ENCODE measurements at regions of chr14 and their contacts with region 1.

Region 1: DNA sequence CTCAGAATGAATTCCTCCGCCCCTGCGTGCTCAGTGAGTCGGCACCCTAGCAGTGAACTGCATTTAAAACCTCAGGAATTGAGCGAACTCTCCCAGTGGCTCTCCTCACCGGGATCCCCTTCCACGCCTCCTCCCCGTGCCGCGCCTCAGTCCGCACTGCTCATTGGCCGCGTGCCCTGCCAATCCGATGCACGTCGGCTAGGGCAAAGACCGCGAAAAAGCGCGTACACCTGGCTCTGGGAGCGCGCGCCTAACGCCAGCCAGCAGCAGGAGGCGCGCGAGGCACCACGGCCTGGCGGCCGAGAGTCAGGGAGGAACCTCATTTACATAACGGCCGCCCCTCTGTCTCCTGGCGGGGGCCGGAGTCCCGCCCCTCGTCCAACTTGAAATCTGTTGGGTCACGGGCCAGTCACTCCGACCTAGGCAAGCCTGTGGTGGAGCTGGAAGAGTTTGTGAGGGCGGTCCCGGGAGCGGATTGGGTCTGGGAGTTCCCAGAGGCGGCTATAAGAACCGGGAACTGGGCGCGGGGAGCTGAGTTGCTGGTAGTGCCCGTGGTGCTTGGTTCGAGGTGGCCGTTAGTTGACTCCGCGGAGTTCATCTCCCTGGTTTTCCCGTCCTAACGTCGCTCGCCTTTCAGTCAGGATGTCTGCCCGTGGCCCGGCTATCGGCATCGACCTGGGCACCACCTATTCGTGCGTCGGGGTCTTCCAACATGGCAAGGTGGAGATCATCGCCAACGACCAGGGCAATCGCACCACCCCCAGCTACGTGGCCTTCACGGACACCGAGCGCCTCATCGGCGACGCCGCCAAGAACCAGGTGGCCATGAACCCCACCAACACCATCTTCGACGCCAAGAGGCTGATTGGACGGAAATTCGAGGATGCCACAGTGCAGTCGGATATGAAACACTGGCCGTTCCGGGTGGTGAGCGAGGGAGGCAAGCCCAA is at the start of gene HSPA2:
- DNase-seq: peak; percentile 94
- H3K4me3 ChIP-seq: peak within 1 kb of the TSS; percentile 71
- H3K27ac ChIP-seq: no peak within 1 kb of the TSS
- H3K4me1 ChIP-seq: peaks cover 3% of the 10 kb centered on the region
- CTCF ChIP-seq: peak; percentile 68
- total RNA-seq, gene HSPA2: 0.54 and 0.57 TPM in 2 replicates

Region 2: DNA sequence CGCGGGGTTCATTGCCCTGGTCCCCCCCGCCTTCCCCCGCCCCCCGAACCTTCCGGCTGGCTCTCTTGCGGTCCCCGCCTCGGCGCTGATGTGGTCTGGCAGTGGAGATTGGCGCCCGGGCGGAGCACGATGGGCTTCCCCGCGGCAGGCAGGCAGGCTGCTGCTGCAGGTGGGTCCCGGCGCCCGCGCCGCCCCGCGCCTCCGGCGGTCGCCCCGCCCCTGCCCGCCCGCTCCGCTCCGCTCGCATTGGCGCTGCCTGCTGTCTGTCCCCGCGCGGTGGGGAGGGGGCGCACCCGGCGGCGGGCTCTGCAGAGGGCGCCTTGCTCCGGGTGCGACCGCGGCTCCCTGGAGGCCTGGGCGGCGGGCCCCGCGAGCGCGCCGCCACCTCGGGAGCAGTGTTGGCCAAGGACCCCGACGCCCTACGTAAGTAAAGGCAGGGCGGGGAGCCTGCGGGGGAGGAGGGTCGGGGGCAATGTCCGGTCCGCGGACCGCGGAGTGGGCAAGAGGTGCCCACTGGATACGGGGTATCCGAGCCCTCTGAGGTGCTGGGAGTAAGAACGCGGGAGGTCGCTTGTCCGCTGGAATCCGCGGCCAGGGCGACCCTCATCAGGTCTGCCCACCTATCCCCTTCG is 75.2 kb before region 1 on chr14 and contains the start of gene AKAP5:
- CTCF ChIA-PET with region 1: no interaction called
- POLR2A ChIA-PET with region 1: no interaction called
- intact Hi-C with region 1: no loop called
- DNase-seq: peak; percentile 60
- H3K4me3 ChIP-seq: peak within 1 kb of the TSS; percentile 60
- H3K27ac ChIP-seq: no peak within 1 kb of the TSS
- H3K4me1 ChIP-seq: peaks cover 44% of the 10 kb centered on the region
- CTCF ChIP-seq: no peak
- total RNA-seq, gene AKAP5: 0.31 and 0.92 TPM in 2 replicates

Region 3: DNA sequence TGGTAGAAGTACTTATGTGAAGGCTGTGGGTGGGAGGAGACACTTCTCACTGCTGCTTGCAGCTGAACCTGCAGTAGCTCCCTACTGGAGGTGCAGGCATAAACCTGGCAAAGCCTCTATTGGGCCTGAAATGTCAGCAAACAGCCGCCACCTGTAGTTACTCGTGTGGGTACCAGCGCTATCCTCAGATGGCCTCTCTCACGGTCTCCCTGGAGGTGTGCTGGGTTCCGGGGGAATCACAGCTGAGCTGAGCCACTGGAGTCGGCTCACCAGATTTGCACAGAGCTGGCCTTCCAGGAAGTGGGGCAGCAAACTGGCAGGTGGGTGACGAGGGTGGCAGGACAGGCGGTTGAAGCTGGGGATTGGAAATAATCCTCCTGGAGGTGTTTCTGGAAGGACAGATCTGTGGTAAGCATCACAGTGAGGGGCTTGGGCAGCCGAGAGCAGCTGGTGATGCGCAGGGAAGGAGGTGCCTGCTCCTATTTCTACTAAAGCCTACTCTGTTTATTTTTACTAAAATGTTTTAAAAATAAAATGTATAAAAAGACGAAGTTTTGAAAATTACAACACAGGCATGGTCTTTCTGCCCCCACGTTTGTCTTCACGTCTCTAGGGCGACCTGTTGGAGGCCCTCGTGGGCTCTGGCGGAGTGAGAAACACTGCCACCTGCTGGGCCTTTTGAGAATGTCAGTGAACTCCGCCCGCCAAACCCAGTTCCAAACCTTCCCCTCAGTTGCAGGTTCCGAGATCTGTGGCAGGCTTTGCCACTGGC is 95.9 kb after region 1 on chr14:
- CTCF ChIA-PET with region 1: no interaction called
- POLR2A ChIA-PET with region 1: no interaction called
- intact Hi-C with region 1: loop called (anchors 2 kb)
- DNase-seq: peak; percentile 69
- H3K4me3 ChIP-seq: no peak overlapping the region
- H3K27ac ChIP-seq: no peak overlapping the region
- H3K4me1 ChIP-seq: no peaks in the 10 kb centered on the region
- CTCF ChIP-seq: peak; percentile 96

Region 4: GRCh38 chr14:66240092-66240491 is 1699.6 kb after region 1 on chr14:
- CTCF ChIA-PET with region 1: no interaction called
- POLR2A ChIA-PET with region 1: interaction called, 10 read pairs
- intact Hi-C with region 1: no loop called
- DNase-seq: no peak
- H3K4me3 ChIP-seq: no peak overlapping the region
- H3K27ac ChIP-seq: no peak overlapping the region
- H3K4me1 ChIP-seq: no peaks in the 10 kb centered on the region
- CTCF ChIP-seq: no peak